ENCODE measurements at regions of chr7 and their contacts with region 1.

Region 1: GRCh38 chr7:128841921-128842651 is 11.9 kb downstream of the FLNC start:
- H3K4me3 Mint-ChIP-seq: no peak overlapping the region
- H3K27ac Mint-ChIP-seq: no peak overlapping the region
- H3K4me1 Mint-ChIP-seq: peaks cover 6% of the 10 kb centered on the region
- H3K27me3 Mint-ChIP-seq: peaks cover 3% of the 10 kb centered on the region

Region 2: DNA sequence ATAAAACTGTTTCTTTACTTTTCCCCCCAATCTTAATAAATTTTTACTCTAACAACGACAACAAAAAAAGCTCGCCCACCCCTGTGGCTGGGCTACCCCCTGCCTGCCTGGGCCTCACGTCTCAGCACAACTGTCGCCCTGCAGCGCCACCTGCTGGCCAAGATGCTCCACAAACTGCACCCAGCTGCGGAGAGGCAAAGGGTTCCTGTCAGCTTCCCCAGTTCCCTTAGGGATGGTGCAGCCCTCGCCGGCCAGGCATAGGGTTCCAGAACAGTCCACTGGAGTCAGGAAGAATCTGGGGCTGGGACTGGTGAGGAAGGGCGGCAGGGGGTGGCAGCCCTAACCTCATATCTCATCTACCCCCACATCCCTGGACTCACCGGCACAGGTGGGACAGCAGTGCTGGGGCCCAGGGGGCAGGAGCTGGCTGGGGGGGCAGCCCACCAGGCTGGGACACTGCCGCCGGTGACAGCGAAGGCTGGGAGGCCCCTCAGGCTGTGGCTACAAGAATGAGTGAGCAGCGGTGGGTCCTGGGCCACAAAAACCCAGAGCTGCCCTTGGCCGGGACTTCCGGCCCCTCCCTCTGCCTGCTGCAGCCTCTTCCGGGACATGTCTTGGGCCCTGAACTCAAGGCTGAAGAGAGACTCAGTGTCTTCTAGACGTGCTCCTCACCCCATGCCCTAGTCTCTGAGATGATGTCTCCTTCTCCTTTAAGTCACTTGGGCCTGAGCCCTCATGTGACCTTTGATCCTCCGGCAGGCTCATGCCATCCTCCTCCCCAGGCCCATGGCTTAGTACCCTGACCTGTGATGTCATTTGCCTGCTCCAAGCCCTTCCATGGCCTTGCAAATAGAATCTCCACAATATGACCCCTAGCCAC is 41.8 kb after region 1 on chr7:
- intact Hi-C with region 1: loop called (anchors 5 kb)
- H3K4me3 Mint-ChIP-seq: no peak overlapping the region
- H3K27ac Mint-ChIP-seq: no peak overlapping the region
- H3K4me1 Mint-ChIP-seq: peaks cover 5% of the 10 kb centered on the region
- H3K27me3 Mint-ChIP-seq: peaks cover 16% of the 10 kb centered on the region